ENCODE measurements at regions of chr20 and their contacts with region 1.

Region 1: DNA sequence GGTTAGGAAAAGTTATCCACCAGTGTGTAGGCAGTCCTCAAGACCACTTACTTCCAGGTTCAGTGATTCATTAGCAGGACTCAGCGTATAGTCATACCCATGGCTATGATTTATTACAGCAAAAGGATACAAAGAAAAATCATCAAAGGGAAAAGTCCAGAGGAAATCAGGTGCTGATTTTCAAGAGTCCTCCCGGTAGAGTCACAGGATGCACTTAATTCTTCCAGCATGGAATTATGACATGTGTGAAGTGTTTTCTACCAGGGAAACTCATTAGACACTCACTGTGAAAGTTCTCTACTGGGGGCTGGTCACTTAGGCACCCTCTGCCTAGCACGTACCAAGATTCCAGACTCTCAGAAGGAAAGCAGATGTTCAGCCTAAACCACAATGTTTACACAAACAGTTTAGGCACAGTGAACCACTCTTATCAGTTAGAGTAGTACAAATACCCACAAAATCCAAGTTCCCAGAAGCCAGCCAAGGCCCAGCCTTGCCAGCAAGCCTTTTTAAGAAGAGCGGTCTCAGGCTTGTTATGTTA is 10.2 kb downstream of the WFDC3 start:
- DNase-seq: peak; percentile 81

Region 2: DNA sequence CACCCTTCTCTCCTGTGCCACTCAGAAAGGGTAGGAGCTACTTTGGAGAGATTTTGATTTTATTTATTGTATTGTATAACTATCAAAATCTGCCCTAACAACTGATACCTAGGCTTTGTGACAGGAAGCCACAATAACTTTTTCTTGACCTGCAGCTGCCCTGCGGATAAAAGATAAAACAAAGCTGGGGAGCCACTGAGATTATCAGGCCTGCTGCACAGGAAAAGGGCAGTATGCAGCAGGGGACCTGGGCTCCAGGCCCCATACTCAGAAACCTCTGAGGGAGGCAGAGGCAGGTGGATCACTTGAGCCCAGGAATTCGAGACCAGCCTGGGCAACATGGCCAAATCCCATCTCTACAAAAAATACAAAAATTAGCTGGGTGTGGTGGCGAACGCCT is 51.2 kb after region 1 on chr20:
- intact Hi-C with region 1: loop called in 1 of 2 experiments (anchors 1 kb)
- DNase-seq: no peak

Region 3: GRCh38 chr20:46132705-46133120 is 351.3 kb after region 1 on chr20:
- intact Hi-C with region 1: no loop called
- DNase-seq: peak; percentile 92